PC-3 (cell line): ENCODE measurements at regions of chr1 and their contacts with region 1.

Region 1: DNA sequence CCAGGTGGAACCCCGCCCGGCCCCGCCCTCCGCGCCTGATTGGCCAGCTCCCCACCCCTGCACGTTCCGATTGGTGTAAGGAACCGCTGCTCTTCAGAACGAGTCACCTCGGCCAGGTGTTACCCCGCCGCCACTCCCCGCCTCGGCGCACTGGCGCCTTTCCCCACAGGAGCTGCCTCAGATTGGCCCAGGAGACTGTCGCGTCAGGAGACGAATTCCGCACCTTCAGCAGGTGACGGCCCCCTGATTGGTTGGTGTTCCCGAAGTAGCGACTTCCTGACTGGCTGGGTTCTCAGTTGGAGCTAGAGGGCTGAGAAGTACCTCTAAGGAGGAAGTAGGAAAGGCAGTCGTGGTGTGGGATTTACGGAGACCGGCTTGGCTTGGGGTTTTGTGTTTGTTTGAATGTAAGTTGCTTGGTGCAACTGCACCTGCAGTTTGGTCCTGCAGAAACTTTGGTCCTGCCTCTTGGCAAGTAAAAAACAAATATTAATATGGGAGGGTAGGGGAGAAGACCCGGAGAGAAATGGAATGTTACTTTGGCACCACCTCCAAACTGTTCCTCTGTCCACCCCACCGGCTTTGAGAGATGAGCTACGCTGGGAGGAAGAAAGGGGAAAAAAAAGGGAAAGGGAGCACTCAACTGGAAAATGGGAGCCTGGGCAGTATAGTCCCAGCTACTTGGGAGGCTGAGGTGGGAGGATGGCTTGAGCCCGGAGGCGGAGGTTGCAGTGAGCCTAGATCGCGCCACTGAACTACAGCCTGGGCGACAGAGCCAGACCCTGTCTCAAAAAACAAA is 411 bp upstream of the F11R start:
- DNase-seq: peak; percentile 99
- ATAC-seq: peak; percentile 81
- H3K4me3 ChIP-seq: peak overlapping the region; percentile 88
- H3K27ac ChIP-seq: peak overlapping the region; percentile 95
- H3K4me1 ChIP-seq: peaks cover 50% of the 10 kb centered on the region
- H3K27me3 ChIP-seq: no peaks in the 10 kb centered on the region
- CTCF ChIP-seq: no peak

Region 2: GRCh38 chr1:160971618-160972056 is 49.7 kb before region 1 on chr1:
- CTCF ChIA-PET with region 1: no interaction called
- POLR2A ChIA-PET with region 1: no interaction called
- intact Hi-C with region 1: no loop called
- DNase-seq: no peak
- ATAC-seq: no peak
- H3K4me3 ChIP-seq: no peak overlapping the region
- H3K27ac ChIP-seq: no peak overlapping the region
- H3K4me1 ChIP-seq: no peaks in the 10 kb centered on the region
- H3K27me3 ChIP-seq: no peaks in the 10 kb centered on the region
- CTCF ChIP-seq: no peak

Region 3: GRCh38 chr1:160997323-160998038 is 23.9 kb before region 1 on chr1:
- CTCF ChIA-PET with region 1: interaction called, 54 read pairs
- POLR2A ChIA-PET with region 1: interaction called, 18 read pairs
- intact Hi-C with region 1: loop called (anchors 2 kb)
- DNase-seq: peak; percentile 74
- ATAC-seq: peak; percentile 73
- H3K4me3 ChIP-seq: no peak overlapping the region
- H3K27ac ChIP-seq: peak overlapping the region; percentile 85
- H3K4me1 ChIP-seq: peaks cover 33% of the 10 kb centered on the region
- H3K27me3 ChIP-seq: no peaks in the 10 kb centered on the region
- CTCF ChIP-seq: peak; percentile 82

Region 4: GRCh38 chr1:161045750-161046571 is 24.6 kb after region 1 on chr1 and contains the start of gene USF1:
- CTCF ChIA-PET with region 1: no interaction called
- POLR2A ChIA-PET with region 1: interaction called, 15 read pairs
- intact Hi-C with region 1: loop called (anchors 1 kb)
- DNase-seq: peak; percentile 98
- ATAC-seq: peak; percentile 82
- H3K4me3 ChIP-seq: peak within 1 kb of the TSS; percentile 80
- H3K27ac ChIP-seq: peak within 1 kb of the TSS; percentile 82
- H3K4me1 ChIP-seq: peaks cover 13% of the 10 kb centered on the region
- H3K27me3 ChIP-seq: no peaks in the 10 kb centered on the region
- CTCF ChIP-seq: no peak
- total RNA-seq, gene USF1: 111 and 113 TPM in 2 replicates

Region 5: GRCh38 chr1:161117759-161118581 is 96.6 kb after region 1 on chr1 and contains the starts of genes NIT1 and PFDN2:
- CTCF ChIA-PET with region 1: no interaction called
- POLR2A ChIA-PET with region 1: no interaction called
- intact Hi-C with region 1: loop called (anchors 10 kb)
- DNase-seq: peak; percentile 90
- ATAC-seq: peak; percentile 71
- H3K4me3 ChIP-seq: peak within 1 kb of the TSS; percentile 85
- H3K27ac ChIP-seq: peak within 1 kb of the TSS; percentile 77
- H3K4me1 ChIP-seq: peaks cover 54% of the 10 kb centered on the region
- H3K27me3 ChIP-seq: no peaks in the 10 kb centered on the region
- CTCF ChIP-seq: no peak
- total RNA-seq, gene NIT1: 18.1 and 27.0 TPM in 2 replicates
- total RNA-seq, gene PFDN2: 174 and 197 TPM in 2 replicates

Region 6: DNA sequence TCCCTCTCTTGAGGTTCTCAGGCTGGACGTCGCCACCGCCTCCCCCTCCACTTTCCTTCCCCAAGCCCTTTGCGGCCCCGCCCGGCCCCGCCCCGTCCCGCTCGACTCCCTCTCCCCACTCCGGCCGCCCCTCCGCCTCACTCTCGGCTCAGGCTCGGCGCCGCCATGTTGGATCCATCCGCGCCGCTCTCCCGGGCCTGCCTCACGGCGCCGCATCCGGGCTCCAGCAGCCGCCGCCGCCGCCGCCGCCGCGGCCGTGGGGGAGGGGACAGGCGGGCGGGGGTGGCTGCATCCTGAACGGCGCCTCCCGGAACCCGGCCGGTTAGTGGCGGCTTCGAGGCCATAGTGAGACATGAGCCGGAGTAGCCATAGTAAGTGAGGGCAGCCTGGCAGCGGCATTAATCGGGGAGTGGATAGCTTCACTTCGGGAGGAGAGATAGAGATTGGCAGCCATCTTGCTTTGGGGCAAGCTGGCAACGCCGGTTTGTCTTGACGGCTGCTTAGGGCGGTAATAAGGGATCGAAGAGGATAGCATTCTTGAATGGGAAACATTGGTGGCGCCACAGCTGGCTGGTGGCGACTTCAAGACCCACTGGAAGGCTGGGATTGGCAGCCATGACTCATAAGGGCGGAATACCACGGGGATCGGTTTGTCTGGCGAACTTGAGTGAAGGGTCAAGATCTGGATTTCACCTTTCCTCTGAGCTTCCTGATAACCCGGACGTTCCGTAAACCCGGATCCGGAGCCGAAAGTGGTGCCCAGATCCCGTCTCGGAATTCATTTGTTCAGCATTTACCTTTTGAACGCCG is 111.3 kb after region 1 on chr1 and contains the start of gene DEDD:
- CTCF ChIA-PET with region 1: no interaction called
- POLR2A ChIA-PET with region 1: interaction called, 11 read pairs
- intact Hi-C with region 1: no loop called
- DNase-seq: peak; percentile 97
- ATAC-seq: peak; percentile 84
- H3K4me3 ChIP-seq: peak within 1 kb of the TSS; percentile 90
- H3K27ac ChIP-seq: peak within 1 kb of the TSS; percentile 91
- H3K4me1 ChIP-seq: peaks cover 18% of the 10 kb centered on the region
- H3K27me3 ChIP-seq: no peaks in the 10 kb centered on the region
- CTCF ChIP-seq: 0 out of 2 replicates have a peak, but pooled peaks have one; percentile 39
- total RNA-seq, gene DEDD: 23.4 and 39.2 TPM in 2 replicates

Region 7: DNA sequence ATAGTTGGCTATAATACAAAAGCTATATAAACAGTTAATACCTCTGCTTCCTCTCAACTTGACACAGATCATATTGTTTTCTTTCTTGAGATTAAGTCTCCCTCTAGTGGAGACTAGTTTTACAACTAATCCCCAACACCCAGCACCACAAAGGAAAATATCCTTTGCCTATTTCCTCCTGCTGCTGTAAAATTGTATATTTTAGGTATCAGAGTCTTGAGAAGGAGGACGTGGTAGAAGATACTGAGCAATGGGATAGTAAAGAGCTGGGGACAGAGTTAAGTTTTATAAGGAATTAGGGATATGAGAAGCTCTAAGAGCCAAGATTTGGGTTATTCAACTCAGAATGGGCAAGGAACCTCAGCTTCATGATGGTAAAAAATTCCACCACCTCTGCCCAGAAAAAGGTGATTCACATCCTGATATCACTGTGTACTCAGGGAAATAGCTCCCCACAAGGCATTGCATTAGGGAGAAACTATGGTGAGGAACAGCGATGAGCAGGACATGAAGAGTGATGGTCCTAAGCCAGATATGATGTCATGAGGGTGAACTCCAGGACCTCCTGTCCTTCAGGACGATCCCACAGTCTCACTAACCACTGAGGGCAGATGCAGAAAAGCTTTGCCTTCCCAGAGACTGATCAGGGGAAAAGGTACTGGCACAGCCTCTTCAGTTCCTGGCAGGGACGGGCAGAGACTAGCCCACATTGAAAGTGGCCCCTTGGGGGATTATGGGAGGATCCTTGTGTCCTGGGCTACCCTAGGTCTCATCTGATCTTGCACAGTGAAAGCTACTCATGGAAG is 361.1 kb after region 1 on chr1:
- CTCF ChIA-PET with region 1: no interaction called
- POLR2A ChIA-PET with region 1: interaction called, 18 read pairs
- intact Hi-C with region 1: no loop called
- DNase-seq: peak; percentile 91
- ATAC-seq: peak; percentile 92
- H3K4me3 ChIP-seq: peak overlapping the region; percentile 44; the same call in 1 of the 2 replicates
- H3K27ac ChIP-seq: peak overlapping the region; percentile 87
- H3K4me1 ChIP-seq: peaks cover 22% of the 10 kb centered on the region
- H3K27me3 ChIP-seq: no peaks in the 10 kb centered on the region
- CTCF ChIP-seq: peak; percentile 84